Activated CD4-positive, alpha-beta T cell treated with anti-CD3 and anti-CD28 coated beads, Interleukin-2, amount 10 ng/mL, durations not matched to agents 24 days and 14 days (primary cell): ENCODE measurements at regions of chr14 and their contacts with region 1.

Region 1: GRCh38 chr14:91418387-91419043 is 895 bp upstream of the CCDC88C start:
- DNase-seq: peak; percentile 95
- H3K4me3 Mint-ChIP-seq: peak overlapping the region; percentile 76
- H3K27ac Mint-ChIP-seq: peak overlapping the region; percentile 88
- H3K4me1 Mint-ChIP-seq: peaks cover 36% of the 10 kb centered on the region
- H3K27me3 Mint-ChIP-seq: peaks cover 2% of the 10 kb centered on the region

Region 2: DNA sequence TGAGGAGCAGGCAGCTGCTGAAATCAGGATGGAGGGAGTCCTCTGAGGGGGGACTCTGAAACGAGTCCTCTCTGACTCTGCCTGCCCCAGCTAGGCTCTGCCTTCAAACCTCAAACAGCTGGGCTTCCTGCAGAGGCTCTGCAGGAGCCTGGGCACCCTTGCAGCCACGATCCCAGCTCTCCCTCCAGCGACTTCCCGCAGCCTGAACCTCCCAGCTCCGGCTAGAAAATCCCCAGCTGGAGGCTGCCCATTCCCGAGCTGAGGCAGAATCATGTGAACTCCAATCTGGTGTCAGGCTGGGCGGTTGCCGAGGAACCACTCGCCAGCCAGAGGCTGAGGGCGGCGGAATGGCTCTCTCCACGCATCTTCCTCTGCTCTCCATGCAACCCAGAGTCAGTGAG is 174.0 kb before region 1 on chr14 and contains the start of gene GPR68:
- intact Hi-C with region 1: loop called (anchors 5 kb)
- DNase-seq: peak; percentile 84
- H3K4me3 Mint-ChIP-seq: peak within 1 kb of the TSS; percentile 84
- H3K27ac Mint-ChIP-seq: peak within 1 kb of the TSS; percentile 91
- H3K4me1 Mint-ChIP-seq: peaks cover 82% of the 10 kb centered on the region
- H3K27me3 Mint-ChIP-seq: no peaks in the 10 kb centered on the region
- total RNA-seq, gene GPR68: 4.6 and 4.9 TPM in 2 replicates

Region 3: GRCh38 chr14:91317381-91318308 is 100.9 kb before region 1 on chr14:
- intact Hi-C with region 1: loop called (anchors 1 kb)
- DNase-seq: peak; percentile 90
- H3K4me3 Mint-ChIP-seq: peak overlapping the region; percentile 82
- H3K27ac Mint-ChIP-seq: peak overlapping the region; percentile 97
- H3K4me1 Mint-ChIP-seq: peaks cover 54% of the 10 kb centered on the region
- H3K27me3 Mint-ChIP-seq: no peaks in the 10 kb centered on the region

Region 4: DNA sequence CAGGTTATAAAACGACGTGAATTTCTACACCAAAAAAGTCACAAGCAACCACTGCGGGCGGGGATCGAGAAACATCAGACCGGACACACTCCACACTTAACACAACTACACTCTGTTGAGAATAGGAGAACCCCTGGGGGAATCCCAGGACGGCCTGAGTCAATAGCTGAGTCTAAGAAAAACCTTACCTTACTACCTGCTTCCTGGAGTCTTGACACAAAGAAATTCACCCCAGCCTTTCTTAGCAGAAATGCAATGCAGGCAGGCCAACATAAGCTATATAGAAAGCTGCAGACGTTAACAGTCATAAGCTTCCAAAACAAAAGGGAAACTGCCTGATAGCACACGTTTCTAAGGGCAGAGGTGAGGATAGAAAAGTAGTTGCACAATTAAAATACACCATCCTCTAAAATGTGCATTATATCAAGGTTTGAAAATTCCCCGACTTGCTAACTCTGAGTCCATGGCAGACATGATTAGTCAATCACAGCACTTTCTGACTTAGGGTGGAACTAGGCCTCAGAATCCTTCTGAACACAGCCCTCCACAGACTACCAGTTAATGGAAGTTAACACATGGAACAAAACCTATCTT is 68.9 kb before region 1 on chr14:
- intact Hi-C with region 1: loop called (anchors 1 kb)
- DNase-seq: peak; percentile 91
- H3K4me3 Mint-ChIP-seq: peak overlapping the region; percentile 80
- H3K27ac Mint-ChIP-seq: peak overlapping the region; percentile 94
- H3K4me1 Mint-ChIP-seq: peaks cover 74% of the 10 kb centered on the region
- H3K27me3 Mint-ChIP-seq: no peaks in the 10 kb centered on the region

Region 5: DNA sequence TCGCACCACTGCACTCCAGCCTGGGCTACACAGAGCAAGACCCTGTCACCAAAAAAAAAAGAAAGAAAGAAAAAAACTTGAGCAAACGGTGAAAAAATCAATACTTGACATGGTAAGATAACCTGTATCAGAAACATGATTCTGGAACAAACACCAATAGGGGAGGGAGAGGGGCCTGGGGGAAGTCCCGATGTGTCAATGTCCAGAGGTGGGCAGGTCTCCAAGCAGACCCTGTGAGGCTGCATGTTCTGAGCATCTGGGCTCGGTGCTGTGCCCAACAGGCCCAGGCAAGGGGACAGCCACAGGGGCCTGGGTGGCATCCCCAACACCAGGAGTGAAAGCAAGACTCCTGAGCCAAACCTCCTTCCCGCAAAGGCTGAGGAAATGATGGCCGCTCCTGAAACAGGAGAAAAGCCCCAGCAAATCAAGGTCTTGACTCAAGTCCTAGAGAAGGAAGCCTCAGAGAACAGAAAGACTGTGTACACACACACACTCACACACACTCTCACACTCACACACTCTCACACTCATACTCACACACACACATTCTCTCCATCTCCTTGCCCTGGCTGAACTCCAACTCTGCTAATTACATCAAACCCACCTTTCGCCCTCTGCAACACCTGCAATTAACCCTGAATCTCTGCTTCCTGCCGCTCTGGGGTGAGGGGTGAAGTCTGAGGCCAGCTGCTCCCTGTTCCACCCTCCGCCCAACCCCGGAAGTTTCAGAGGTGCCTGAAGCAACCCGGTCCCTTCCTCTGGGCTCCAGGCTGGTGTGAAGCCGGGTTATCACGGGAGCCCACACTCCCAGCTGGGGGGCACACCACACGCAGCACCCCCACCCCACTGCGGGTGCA is 21.3 kb before region 1 on chr14:
- intact Hi-C with region 1: loop called (anchors 2 kb)
- DNase-seq: peak; percentile 91
- H3K4me3 Mint-ChIP-seq: peak overlapping the region; percentile 74
- H3K27ac Mint-ChIP-seq: peak overlapping the region; percentile 92
- H3K4me1 Mint-ChIP-seq: peaks cover 73% of the 10 kb centered on the region
- H3K27me3 Mint-ChIP-seq: no peaks in the 10 kb centered on the region

Region 6: DNA sequence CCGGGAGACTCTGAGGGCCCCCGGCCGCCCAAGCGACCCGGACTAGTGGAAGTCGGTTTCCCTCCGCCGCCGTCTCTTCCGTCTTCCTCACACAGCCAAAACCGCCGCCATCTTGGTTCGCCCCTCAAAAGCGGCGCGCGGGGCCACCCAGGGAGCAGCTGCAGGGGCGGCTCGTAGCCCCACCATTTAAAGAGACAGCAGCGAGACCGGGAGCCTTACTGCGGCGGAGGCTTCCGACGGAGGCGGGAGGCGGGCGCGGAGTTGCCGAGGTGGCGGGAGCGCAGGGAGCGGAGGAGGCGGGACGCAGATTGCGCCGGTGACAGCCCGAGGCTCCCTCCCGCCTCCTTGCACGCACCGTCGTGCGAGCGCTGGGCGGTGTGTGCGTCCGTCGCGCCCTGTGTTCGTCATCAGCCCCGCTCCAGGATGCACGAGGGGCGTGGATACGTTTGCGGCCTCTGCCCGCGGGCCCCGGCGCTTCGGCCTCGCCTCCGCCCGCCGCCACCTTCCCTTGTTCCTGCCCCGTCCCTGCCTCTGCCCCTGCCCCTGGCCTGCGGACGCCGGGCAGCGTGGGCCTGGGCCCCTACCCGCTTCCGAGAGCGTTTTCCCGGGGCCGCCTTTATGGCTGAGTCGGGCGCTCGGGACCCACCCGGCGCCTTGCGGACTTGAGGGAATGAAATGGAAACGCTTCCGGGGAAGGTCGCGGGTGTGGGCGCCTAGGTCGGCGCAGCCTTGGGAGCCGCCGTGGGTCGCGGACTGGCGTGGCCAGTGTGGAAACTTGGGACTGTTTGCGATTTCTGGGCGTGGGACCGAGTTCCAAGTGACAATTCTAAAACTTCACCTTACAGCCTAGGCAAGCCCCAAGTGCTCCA is 91.9 kb after region 1 on chr14 and contains the start of gene PPP4R3A:
- intact Hi-C with region 1: loop called (anchors 2 kb)
- DNase-seq: peak; percentile 97
- H3K4me3 Mint-ChIP-seq: peak within 1 kb of the TSS; percentile 97
- H3K27ac Mint-ChIP-seq: peak within 1 kb of the TSS; percentile 100
- H3K4me1 Mint-ChIP-seq: peaks cover 18% of the 10 kb centered on the region
- H3K27me3 Mint-ChIP-seq: peaks cover 3% of the 10 kb centered on the region
- total RNA-seq, gene PPP4R3A: 119 and 138 TPM in 2 replicates